ENCODE measurements at regions of chr19 and their contacts with region 1.

Region 1: GRCh38 chr19:29596885-29597525 is 9.1 kb upstream of the POP4 start:
- DNase-seq: no peak
- H3K4me3 Mint-ChIP-seq: no peak overlapping the region
- H3K27ac Mint-ChIP-seq: no peak overlapping the region
- H3K4me1 Mint-ChIP-seq: no peaks in the 10 kb centered on the region
- H3K27me3 Mint-ChIP-seq: peaks cover 9% of the 10 kb centered on the region

Region 2: DNA sequence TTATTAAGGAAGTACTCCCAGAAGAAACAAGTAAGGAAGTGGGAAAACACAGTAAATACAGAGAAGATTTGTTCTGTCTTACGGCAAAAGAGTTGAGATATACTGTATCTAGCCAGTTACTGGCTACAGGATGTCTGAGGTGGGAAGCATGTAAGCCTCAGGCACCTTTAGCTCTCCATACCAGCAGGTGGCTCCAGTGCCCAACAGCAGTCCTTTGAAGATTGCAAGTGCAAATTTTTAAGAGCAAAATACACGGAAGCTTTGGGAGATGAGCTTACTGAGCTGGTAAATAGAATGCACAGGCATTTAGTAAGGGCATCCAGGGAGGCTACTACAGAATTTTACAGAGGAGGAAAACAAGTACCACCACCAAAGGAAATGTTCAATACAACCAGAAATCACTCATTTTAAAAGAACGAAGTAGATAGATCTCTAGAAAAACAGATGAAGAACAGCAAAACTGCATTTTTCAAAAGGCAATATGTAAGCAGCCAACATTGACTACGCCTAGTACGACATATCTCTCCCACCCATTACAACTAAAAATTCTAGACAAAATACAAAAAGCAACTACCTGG is 129.1 kb before region 1 on chr19:
- CTCF ChIA-PET with region 1: no interaction called
- intact Hi-C with region 1: loop called (anchors 10 kb)
- DNase-seq: peak; percentile 51
- H3K4me3 Mint-ChIP-seq: no peak overlapping the region
- H3K27ac Mint-ChIP-seq: no peak overlapping the region
- H3K4me1 Mint-ChIP-seq: no peaks in the 10 kb centered on the region
- H3K27me3 Mint-ChIP-seq: peaks cover 21% of the 10 kb centered on the region

Region 3: GRCh38 chr19:29844891-29845572 is 248.0 kb after region 1 on chr19:
- CTCF ChIA-PET with region 1: no interaction called
- intact Hi-C with region 1: no loop called
- DNase-seq: peak; percentile 96
- H3K4me3 Mint-ChIP-seq: peak overlapping the region; percentile 83
- H3K27ac Mint-ChIP-seq: peak overlapping the region; percentile 79
- H3K4me1 Mint-ChIP-seq: peaks cover 10% of the 10 kb centered on the region
- H3K27me3 Mint-ChIP-seq: no peaks in the 10 kb centered on the region